Activated CD8-positive, alpha-beta T cell treated with anti-CD3 and anti-CD28 coated beads for 36 hours (primary cell): ENCODE measurements at regions of chr12 and their contacts with region 1.

Region 1: GRCh38 chr12:1117970-1118563 is 127.0 kb downstream of the ERC1 start:
- DNase-seq: peak; percentile 87
- ATAC-seq: peak; percentile 77
- H3K4me3 Mint-ChIP-seq: no peak overlapping the region
- H3K27ac Mint-ChIP-seq: no peak overlapping the region
- H3K4me1 Mint-ChIP-seq: peaks cover 19% of the 10 kb centered on the region
- H3K27me3 Mint-ChIP-seq: no peaks in the 10 kb centered on the region
- CTCF ChIP-seq: peak; percentile 97

Region 2: GRCh38 chr12:916240-916639 is 201.8 kb before region 1 on chr12:
- CTCF ChIA-PET with region 1: no interaction called
- POLR2A ChIA-PET with region 1: no interaction called
- intact Hi-C with region 1: no loop called
- DNase-seq: peak; percentile 33
- ATAC-seq: peak; percentile 39
- H3K4me3 Mint-ChIP-seq: peak overlapping the region; percentile 9
- H3K27ac Mint-ChIP-seq: peak overlapping the region; percentile 87
- H3K4me1 Mint-ChIP-seq: peaks cover 16% of the 10 kb centered on the region
- H3K27me3 Mint-ChIP-seq: no peaks in the 10 kb centered on the region
- CTCF ChIP-seq: no peak

Region 3: DNA sequence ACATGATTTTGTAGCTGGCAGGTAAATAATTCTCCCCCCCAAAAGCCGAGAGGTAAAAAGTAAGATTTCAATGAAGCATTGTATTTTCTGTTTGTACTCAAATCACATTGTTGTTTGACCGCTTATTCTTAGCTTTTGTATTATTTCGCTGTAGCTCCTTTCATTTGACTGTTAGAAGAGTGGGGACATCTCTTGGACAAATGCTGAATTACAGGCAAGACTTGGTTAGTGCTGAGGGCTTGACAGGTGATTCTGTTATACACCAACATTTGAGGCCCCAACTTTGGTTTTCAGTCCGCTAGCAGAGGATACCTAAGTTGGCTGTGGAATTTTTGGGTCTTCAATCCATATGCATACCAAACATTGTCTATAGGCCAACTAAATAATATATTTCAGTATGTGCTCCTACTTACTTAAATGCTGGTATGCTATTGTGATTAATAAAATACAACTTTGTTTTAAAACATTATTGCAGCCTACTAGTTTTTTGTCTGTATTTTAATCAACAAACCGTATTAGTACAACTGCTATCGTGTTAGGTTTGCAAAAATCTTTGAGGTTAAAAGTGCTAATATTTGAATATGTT is 24.8 kb before region 1 on chr12:
- CTCF ChIA-PET with region 1: interaction called, 15 read pairs
- POLR2A ChIA-PET with region 1: no interaction called
- intact Hi-C with region 1: no loop called
- DNase-seq: peak; percentile 51
- ATAC-seq: peak; percentile 93
- H3K4me3 Mint-ChIP-seq: no peak overlapping the region
- H3K27ac Mint-ChIP-seq: no peak overlapping the region
- H3K4me1 Mint-ChIP-seq: peaks cover 19% of the 10 kb centered on the region
- H3K27me3 Mint-ChIP-seq: no peaks in the 10 kb centered on the region
- CTCF ChIP-seq: peak; percentile 87

Region 4: GRCh38 chr12:1147821-1148220 is 29.8 kb after region 1 on chr12:
- CTCF ChIA-PET with region 1: interaction called, 10 read pairs
- POLR2A ChIA-PET with region 1: no interaction called
- intact Hi-C with region 1: no loop called
- DNase-seq: no peak
- ATAC-seq: no peak
- H3K4me3 Mint-ChIP-seq: no peak overlapping the region
- H3K27ac Mint-ChIP-seq: no peak overlapping the region
- H3K4me1 Mint-ChIP-seq: peaks cover 7% of the 10 kb centered on the region
- H3K27me3 Mint-ChIP-seq: no peaks in the 10 kb centered on the region
- CTCF ChIP-seq: no peak

Region 5: DNA sequence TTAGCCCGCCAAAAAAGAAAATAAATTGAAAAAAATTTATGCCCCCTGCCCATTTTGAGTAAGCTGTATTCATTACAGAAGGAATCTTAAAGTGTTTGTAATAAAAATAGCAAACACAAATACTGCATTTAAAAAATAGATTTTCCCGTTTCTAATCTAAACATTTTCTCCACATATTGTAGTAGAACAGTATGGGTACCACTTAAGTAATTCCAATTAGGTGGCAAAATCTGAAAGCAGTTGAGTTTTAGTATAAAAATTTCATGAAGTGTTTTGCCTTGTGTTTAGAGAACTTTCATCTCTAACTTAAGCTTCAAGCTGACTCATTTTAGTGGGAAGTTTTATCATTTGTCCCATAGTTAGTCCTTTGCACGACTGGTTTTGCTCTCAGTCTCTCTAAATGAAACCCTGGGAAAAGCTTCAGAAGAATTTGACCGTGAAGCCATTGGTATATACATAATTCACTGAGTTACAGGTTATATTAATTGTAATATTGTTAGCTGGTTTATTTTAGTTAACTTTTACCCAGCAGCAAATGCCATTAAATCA is 87.5 kb after region 1 on chr12:
- CTCF ChIA-PET with region 1: interaction called, 12 read pairs
- POLR2A ChIA-PET with region 1: no interaction called
- intact Hi-C with region 1: no loop called
- DNase-seq: no peak
- ATAC-seq: no peak
- H3K4me3 Mint-ChIP-seq: no peak overlapping the region
- H3K27ac Mint-ChIP-seq: no peak overlapping the region
- H3K4me1 Mint-ChIP-seq: peaks cover 11% of the 10 kb centered on the region
- H3K27me3 Mint-ChIP-seq: no peaks in the 10 kb centered on the region
- CTCF ChIP-seq: no peak

Region 6: DNA sequence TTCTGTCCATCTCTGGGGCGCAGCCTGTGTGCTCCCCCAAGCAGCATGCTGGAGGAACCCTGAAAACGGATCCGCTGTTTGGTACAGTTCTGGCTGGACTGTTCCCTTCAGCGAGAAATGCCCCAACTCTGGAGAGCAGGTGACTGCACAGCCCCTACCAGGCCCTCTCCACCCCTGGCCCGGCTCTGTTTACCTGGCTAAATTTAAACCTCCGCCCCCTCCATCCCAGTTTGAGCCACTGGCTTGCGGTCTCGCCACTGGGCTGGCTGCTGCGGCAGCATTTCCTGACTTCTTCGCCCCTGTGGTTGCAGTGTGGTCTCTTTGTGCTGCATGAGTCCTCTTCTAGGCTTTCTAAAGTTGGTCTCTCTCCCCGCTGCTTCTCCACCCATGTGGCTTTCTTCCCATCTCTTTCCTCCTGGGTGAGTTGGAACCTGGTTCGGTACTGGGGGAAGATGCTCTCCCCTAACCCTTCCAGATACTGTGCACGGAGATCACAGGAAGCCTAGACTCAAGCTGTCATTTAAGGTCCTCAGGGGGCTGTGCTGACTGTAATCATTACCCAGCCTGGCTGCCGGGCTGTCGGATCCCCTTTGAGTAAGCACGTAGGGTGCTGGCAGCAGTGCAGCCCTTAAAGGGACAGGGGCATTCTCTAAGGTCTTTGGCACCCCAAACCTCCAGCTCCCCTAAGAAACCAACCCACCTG is 415.7 kb after region 1 on chr12:
- CTCF ChIA-PET with region 1: interaction called, 11 read pairs
- POLR2A ChIA-PET with region 1: no interaction called
- intact Hi-C with region 1: no loop called
- DNase-seq: peak; percentile 80
- ATAC-seq: peak; percentile 84
- H3K4me3 Mint-ChIP-seq: peak overlapping the region; percentile 62
- H3K27ac Mint-ChIP-seq: no peak overlapping the region
- H3K4me1 Mint-ChIP-seq: peaks cover 32% of the 10 kb centered on the region
- H3K27me3 Mint-ChIP-seq: peaks cover 69% of the 10 kb centered on the region
- CTCF ChIP-seq: peak; percentile 9

Region 7: DNA sequence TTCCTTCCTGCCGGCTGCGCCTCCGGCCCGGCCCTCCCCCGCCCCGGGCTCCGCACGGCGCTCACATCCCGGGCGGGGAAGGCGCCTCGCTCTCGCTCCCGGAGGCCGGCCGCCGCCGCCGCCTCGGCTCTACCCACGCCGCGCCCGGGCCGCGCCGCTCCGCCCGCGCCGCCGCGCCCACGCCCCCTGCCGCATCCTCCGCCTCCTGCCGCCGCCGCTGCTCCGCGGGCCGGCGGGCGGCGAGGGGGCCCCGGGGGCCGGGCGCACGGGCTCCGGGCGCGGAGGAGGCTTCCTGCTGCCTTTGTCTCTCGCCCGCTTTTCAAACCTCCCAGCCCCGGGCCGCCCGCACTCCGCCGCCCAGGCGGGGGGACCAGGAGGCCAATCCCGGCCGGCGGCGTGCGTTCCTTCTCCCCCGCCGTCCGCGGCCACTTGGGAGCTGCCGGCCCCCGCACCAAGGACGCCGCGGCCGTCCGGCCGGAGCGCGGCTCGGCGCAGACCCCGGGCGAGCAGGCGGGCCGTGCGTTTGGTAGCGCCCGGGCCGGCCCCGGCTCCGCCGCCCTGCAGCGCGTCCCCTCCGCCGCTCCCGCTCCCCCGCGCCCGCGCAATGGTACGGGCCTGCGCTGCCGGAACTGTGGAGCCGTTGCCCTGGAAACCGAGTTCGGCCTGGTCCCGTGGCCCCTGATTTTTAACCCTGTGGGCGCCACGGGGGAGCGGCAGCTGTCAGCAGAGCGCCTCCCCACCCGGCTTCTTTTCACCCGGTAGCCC is 476.4 kb after region 1 on chr12 and contains the start of gene FBXL14:
- CTCF ChIA-PET with region 1: interaction called, 52 read pairs
- POLR2A ChIA-PET with region 1: interaction called, 4 read pairs
- intact Hi-C with region 1: no loop called
- DNase-seq: peak; percentile 92
- ATAC-seq: peak; percentile 64
- H3K4me3 Mint-ChIP-seq: peak within 1 kb of the TSS; percentile 95
- H3K27ac Mint-ChIP-seq: peak within 1 kb of the TSS; percentile 88
- H3K4me1 Mint-ChIP-seq: peaks cover 29% of the 10 kb centered on the region
- H3K27me3 Mint-ChIP-seq: no peaks in the 10 kb centered on the region
- CTCF ChIP-seq: no peak
- total RNA-seq, gene FBXL14: 23.3 to 25.1 TPM